ENCODE measurements at regions of chr9 and their contacts with region 1.

Region 1: GRCh38 chr9:128438343-128439109 is 17.3 kb upstream of the ODF2 start:
- H3K4me3 ChIP-seq: no peak overlapping the region
- H3K27ac ChIP-seq: no peak overlapping the region
- H3K4me1 ChIP-seq: no peaks in the 10 kb centered on the region
- CTCF ChIP-seq: peak; percentile 67

Region 2: DNA sequence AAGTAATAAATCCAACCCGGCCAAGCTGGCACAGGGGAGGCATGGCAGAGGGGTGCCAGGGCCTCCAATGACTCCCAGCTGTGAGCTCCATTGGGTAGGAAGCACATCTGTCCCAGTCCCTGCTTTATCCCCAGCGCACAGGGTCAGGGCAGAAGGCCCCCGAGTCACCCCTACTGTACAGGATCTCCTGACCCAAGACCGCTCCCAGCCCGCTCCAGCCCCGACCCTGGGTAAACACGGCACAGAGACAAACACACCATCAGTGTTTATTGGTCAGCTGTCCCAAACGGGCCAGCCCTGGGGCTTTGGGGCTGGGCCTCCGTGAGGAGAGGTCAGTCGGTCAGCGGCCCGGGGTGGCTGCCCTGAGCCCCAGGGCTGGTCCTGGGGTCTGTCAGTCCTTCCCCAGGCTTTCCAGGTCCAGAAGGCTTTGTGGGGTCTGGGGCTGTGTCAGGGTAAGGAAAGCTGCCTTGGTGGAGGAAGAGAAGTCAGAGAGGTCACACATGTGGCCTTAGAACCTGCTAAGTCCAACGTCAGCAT is 503.6 kb before region 1 on chr9:
- CTCF ChIA-PET with region 1: no interaction called
- POLR2A ChIA-PET with region 1: no interaction called
- H3K4me3 ChIP-seq: no peak overlapping the region
- H3K27ac ChIP-seq: no peak overlapping the region
- H3K4me1 ChIP-seq: 0 out of 2 replicates have a peak, but pooled peaks cover 7% of the 10 kb centered on the region
- CTCF ChIP-seq: no peak

Region 3: DNA sequence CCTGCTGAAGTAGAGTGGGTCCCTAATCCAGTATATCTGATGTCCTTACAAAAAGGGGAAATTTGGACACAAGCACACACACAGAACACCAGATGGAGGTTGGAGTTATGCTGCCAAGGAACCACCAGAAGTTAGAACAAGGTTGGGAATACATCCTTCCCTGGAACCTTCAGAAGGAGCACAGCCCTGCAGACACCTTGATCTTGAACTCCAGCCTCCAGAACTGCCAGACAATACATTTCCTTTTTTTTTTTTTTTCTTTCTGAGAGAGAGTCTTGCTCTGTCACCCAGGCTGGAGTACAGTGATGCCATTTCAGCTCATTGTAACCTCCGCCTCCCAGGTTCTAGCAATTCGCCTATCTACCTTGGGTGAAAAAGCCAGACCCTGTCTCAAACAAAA is 10.2 kb after region 1 on chr9:
- CTCF ChIA-PET with region 1: interaction called, 27 read pairs
- POLR2A ChIA-PET with region 1: interaction called, 3 read pairs
- H3K4me3 ChIP-seq: no peak overlapping the region
- H3K27ac ChIP-seq: no peak overlapping the region
- H3K4me1 ChIP-seq: no peaks in the 10 kb centered on the region
- CTCF ChIP-seq: no peak

Region 4: GRCh38 chr9:128455849-128456612 is 17.5 kb after region 1 on chr9 and contains the start of gene ODF2:
- CTCF ChIA-PET with region 1: interaction called, 19 read pairs
- POLR2A ChIA-PET with region 1: interaction called, 5 read pairs
- H3K4me3 ChIP-seq: peak within 1 kb of the TSS; percentile 57
- H3K27ac ChIP-seq: peak within 1 kb of the TSS; percentile 62
- H3K4me1 ChIP-seq: peaks cover 2% of the 10 kb centered on the region; the same call in 1 of the 2 replicates
- CTCF ChIP-seq: no peak